GM12878 (cell line): ENCODE measurements at regions of chr17 and their contacts with region 1.

Region 1: DNA sequence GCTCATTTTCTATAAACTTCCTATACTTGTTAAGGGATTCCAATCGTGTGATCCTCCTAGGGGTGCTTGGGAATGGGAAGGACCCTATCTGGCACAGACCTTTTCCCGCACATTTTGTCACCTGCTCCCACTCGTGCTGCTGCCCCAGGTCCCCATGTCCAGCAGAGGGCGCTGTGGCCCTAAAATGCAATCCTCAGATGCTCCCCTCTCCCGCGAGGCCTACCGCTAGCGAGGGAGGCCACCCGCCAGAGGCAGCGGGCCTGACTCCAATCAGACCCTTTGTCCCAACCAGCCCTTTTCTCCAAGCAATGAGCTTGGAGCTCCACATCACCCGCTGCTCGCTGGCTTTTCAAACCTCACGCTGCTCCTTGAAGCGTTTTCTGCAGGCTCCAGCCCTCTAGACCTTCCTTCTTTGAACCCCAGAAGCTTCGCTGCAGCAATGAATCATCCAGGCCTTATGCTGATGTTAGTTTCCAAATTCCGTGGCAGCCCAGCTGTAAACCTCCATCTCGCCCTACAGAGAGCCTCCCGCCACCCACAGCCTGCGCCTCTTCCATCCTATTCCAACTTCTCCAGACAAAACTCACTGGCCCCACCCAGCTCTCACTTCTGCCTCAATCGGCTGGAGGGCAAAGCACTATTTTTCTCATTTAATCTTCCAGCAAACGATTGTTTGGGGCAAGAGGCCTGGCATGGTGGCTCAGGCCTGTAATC is 23.6 kb upstream of the FZD2 start:
- DNase-seq: no peak
- ATAC-seq: peak; percentile 99
- H3K4me3 ChIP-seq: no peak overlapping the region
- H3K27ac ChIP-seq: no peak overlapping the region
- H3K4me1 ChIP-seq: peaks cover 10% of the 10 kb centered on the region
- H3K27me3 ChIP-seq: no peaks in the 10 kb centered on the region
- CTCF ChIP-seq: peak; percentile 93 to 98 (median 95)
- EP300 ChIP-seq: no peak
- POLR2A ChIP-seq: no peak
- RAD21 ChIP-seq: peak; percentile 94

Region 2: DNA sequence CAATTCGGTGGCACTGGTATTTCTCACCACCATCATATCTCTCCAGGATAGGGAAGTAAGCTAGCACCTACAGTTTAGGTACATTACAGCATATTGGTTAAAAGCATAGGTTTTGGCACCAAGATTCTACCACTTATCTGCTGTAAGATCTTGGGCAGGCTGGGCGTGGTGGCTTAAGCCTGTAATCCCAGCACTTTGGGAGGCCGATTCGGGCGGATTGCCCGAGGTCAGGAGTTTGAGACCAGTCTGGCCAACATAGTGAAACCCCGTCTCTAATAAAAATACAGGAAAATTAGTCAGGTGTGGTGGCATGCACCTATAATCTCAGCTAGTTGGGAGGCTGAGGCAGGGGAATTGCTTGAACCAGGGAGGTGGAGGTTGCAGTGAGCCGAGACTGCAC is 81.9 kb before region 1 on chr17:
- CTCF ChIA-PET with region 1: no interaction called
- POLR2A ChIA-PET with region 1: no interaction called
- RAD21 ChIA-PET with region 1: no interaction called
- SMC1A ChIA-PET with region 1: no interaction called
- in situ Hi-C with region 1: no loop called
- intact Hi-C with region 1: no loop called
- DNase-seq: no peak
- ATAC-seq: no peak
- H3K4me3 ChIP-seq: no peak overlapping the region
- H3K27ac ChIP-seq: no peak overlapping the region
- H3K4me1 ChIP-seq: no peaks in the 10 kb centered on the region
- H3K27me3 ChIP-seq: no peaks in the 10 kb centered on the region
- CTCF ChIP-seq: no peak
- EP300 ChIP-seq: no peak
- POLR2A ChIP-seq: no peak
- RAD21 ChIP-seq: no peak

Region 3: DNA sequence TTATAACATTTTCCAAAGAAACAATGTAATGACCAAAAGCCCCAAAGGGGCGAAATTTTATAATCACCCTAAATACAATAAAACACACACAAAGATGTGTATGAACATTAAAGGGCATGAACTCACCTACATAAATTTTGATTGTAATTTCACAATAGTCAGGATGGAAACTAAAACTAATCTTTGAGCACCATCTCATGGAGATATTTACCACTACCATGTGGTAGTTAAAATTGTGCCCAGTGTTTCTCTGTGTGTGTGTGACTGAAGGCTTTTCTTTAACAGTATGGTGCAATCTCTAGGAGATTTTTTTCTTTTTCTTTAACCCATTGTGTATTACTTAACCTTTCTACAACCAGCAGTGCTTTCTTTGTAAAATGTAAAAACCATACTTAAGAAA is 102.9 kb after region 1 on chr17:
- CTCF ChIA-PET with region 1: interaction called, 13 read pairs
- POLR2A ChIA-PET with region 1: no interaction called
- RAD21 ChIA-PET with region 1: interaction called, 8 read pairs
- SMC1A ChIA-PET with region 1: interaction called, 9 read pairs
- in situ Hi-C with region 1: loop called (anchors 5 kb)
- intact Hi-C with region 1: loop called (anchors 1 kb)
- DNase-seq: no peak
- ATAC-seq: peak; percentile 46; the same call in 2 of the 3 replicates
- H3K4me3 ChIP-seq: no peak overlapping the region
- H3K27ac ChIP-seq: no peak overlapping the region
- H3K4me1 ChIP-seq: no peaks in the 10 kb centered on the region
- H3K27me3 ChIP-seq: no peaks in the 10 kb centered on the region; a peak in 2 of 4 replicates
- CTCF ChIP-seq: peak in 2 of 3 experiments; percentile 21 to 45; a peak in 3 of 6 replicates
- EP300 ChIP-seq: no peak
- POLR2A ChIP-seq: no peak
- RAD21 ChIP-seq: peak; percentile 51

Region 4: DNA sequence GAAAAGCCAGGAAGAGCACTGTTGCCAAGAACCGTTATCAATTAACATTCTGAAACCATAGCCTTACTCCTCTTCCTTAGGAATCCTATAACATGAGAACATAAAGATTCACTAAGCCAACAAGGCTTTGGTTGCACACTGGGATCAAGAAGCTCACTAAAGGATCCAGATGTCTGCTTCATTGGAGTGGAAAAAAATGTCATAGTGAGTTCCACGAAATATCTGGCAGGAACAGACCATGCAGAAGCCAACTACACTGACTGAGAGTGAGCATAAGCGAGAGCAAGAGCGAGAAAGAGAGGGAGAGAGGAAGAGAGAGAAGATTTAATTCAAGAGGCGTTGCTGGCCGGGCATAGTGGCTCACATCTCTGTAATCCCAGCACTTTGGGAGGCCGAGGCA is 109.1 kb after region 1 on chr17:
- CTCF ChIA-PET with region 1: interaction called, 11 read pairs
- POLR2A ChIA-PET with region 1: no interaction called
- RAD21 ChIA-PET with region 1: no interaction called
- SMC1A ChIA-PET with region 1: interaction called, 3 read pairs
- in situ Hi-C with region 1: loop called (anchors 5 kb)
- intact Hi-C with region 1: no loop called
- DNase-seq: no peak
- ATAC-seq: no peak
- H3K4me3 ChIP-seq: no peak overlapping the region
- H3K27ac ChIP-seq: no peak overlapping the region
- H3K4me1 ChIP-seq: no peaks in the 10 kb centered on the region
- H3K27me3 ChIP-seq: no peaks in the 10 kb centered on the region; a peak in 2 of 4 replicates
- CTCF ChIP-seq: no peak
- EP300 ChIP-seq: no peak
- POLR2A ChIP-seq: no peak
- RAD21 ChIP-seq: no peak

Region 5: DNA sequence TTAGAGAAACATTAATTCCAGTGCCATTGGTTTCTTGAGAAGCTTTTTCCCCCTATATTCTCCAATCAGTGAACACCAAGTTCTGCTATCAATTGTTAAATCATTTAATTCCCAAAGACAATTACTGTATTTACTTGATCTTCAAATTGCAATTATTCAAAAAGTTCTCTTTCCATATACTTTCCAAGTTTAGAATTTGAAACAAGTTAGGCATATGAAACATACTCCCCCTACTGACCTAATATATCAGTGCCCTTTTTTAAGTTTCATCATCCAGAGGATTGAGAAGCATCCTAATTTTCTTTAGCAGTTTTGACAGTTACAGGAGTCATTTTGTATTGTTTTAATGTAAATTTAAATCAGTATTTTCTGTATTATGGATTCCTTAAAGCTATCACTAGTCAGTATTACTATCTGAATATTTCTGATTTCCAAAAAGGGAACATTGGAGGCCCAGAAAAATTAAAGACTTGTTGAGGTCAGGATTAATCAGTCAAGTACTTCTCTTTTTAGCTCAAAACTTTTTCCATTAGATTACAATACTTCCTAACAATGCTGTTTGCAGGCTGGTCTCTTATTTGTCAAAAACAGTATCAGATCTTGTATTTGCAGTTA is 138.9 kb after region 1 on chr17:
- CTCF ChIA-PET with region 1: interaction called, 118 read pairs
- POLR2A ChIA-PET with region 1: no interaction called
- RAD21 ChIA-PET with region 1: interaction called, 7 read pairs
- SMC1A ChIA-PET with region 1: interaction called, 18 read pairs
- in situ Hi-C with region 1: no loop called
- intact Hi-C with region 1: loop called (anchors 1 kb)
- DNase-seq: no peak
- ATAC-seq: no peak
- H3K4me3 ChIP-seq: no peak overlapping the region
- H3K27ac ChIP-seq: no peak overlapping the region
- H3K4me1 ChIP-seq: no peaks in the 10 kb centered on the region
- H3K27me3 ChIP-seq: no peaks in the 10 kb centered on the region; a peak in 1 of 4 replicates
- CTCF ChIP-seq: peak; percentile 47 to 57 (median 52); a peak in 5 of 6 replicates
- EP300 ChIP-seq: no peak
- POLR2A ChIP-seq: no peak
- RAD21 ChIP-seq: peak; percentile 36

Region 6: GRCh38 chr17:44689477-44690217 is 156.0 kb after region 1 on chr17 and contains the start of gene CCDC43:
- CTCF ChIA-PET with region 1: interaction called, 10 read pairs
- POLR2A ChIA-PET with region 1: no interaction called
- RAD21 ChIA-PET with region 1: interaction called, 4 read pairs
- SMC1A ChIA-PET with region 1: interaction called, 3 read pairs
- in situ Hi-C with region 1: no loop called
- intact Hi-C with region 1: no loop called
- DNase-seq: peak; percentile 75
- ATAC-seq: peak; percentile 97
- H3K4me3 ChIP-seq: peak within 1 kb of the TSS; percentile 96
- H3K27ac ChIP-seq: peak within 1 kb of the TSS; percentile 69
- H3K4me1 ChIP-seq: peaks cover 3% of the 10 kb centered on the region; the same call in 1 of the 2 replicates
- H3K27me3 ChIP-seq: no peaks in the 10 kb centered on the region
- CTCF ChIP-seq: no peak
- EP300 ChIP-seq: no peak
- POLR2A ChIP-seq: peak; percentile 97
- RAD21 ChIP-seq: no peak
- polyA plus RNA-seq, gene CCDC43: 10.8 to 15.7 TPM

Region 7: GRCh38 chr17:44864866-44865660 is 331.4 kb after region 1 on chr17:
- CTCF ChIA-PET with region 1: interaction called, 9 read pairs
- POLR2A ChIA-PET with region 1: no interaction called
- RAD21 ChIA-PET with region 1: interaction called, 4 read pairs
- SMC1A ChIA-PET with region 1: no interaction called
- in situ Hi-C with region 1: no loop called
- intact Hi-C with region 1: loop called (anchors 1 kb)
- DNase-seq: no peak
- ATAC-seq: peak; percentile 92
- H3K4me3 ChIP-seq: no peak overlapping the region
- H3K27ac ChIP-seq: no peak overlapping the region
- H3K4me1 ChIP-seq: no peaks in the 10 kb centered on the region
- H3K27me3 ChIP-seq: no peaks in the 10 kb centered on the region
- CTCF ChIP-seq: peak; percentile 72 to 88 (median 78)
- EP300 ChIP-seq: no peak
- POLR2A ChIP-seq: no peak
- RAD21 ChIP-seq: peak; percentile 58